CD8-positive, alpha-beta memory T cell (primary cell): ENCODE measurements at regions of chr19 and their contacts with region 1.

Region 1: GRCh38 chr19:1113033-1113985 is 9.5 kb downstream of the GPX4 start:
- DNase-seq: peak; percentile 78 to 90 (median 83)
- H3K4me3 ChIP-seq: no peak overlapping the region
- H3K4me3 Mint-ChIP-seq: no peak overlapping the region
- H3K27ac ChIP-seq: peak overlapping the region; percentile 16
- H3K27ac Mint-ChIP-seq: peak overlapping the region in 3 of 8 donors; percentile 42 to 57 (median 43)
- H3K4me1 ChIP-seq: peaks cover 6% of the 10 kb centered on the region
- H3K4me1 Mint-ChIP-seq: peaks cover 0 to 3% (median 0%) of the 10 kb centered on the region in 3 donors
- H3K27me3 ChIP-seq: no peaks in the 10 kb centered on the region
- H3K27me3 Mint-ChIP-seq: no peaks in the 10 kb centered on the region

Region 2: DNA sequence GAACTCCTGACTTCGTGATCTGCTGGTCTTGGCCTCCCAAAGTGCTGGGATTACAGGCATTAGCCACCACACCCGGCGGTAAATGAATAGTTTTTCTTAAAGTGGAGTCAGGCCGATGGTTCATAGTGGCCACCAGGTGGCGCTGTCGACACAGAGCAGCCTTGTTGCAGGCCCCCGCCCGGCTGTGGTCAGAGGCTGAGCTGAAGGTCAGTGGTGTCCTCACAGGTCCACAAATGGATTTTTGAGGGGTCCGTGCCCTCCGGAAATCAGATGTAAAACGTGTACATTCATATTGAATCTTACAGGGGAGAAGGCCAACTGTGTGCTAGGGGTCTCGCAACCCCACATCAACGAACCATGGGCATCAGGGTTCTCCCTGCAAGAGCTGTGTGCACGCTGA is 142.6 kb before region 1 on chr19:
- CTCF ChIA-PET with region 1: no interaction called
- POLR2A ChIA-PET with region 1: no interaction called
- DNase-seq: no peak
- H3K4me3 ChIP-seq: no peak overlapping the region
- H3K4me3 Mint-ChIP-seq: no peak overlapping the region
- H3K27ac ChIP-seq: no peak overlapping the region
- H3K27ac Mint-ChIP-seq: no peak overlapping the region
- H3K4me1 ChIP-seq: no peaks in the 10 kb centered on the region
- H3K4me1 Mint-ChIP-seq: no peaks in the 10 kb centered on the region
- H3K27me3 ChIP-seq: no peaks in the 10 kb centered on the region
- H3K27me3 Mint-ChIP-seq: no peaks in the 10 kb centered on the region

Region 3: GRCh38 chr19:1131738-1132551 is 18.6 kb after region 1 on chr19:
- CTCF ChIA-PET with region 1: interaction called, 13 read pairs
- POLR2A ChIA-PET with region 1: interaction called, 4 read pairs
- DNase-seq: peak; percentile 80 to 90 (median 83)
- H3K4me3 ChIP-seq: peak overlapping the region; percentile 84
- H3K4me3 Mint-ChIP-seq: peak overlapping the region; percentile 78 to 92 (median 86)
- H3K27ac ChIP-seq: peak overlapping the region; percentile 87
- H3K27ac Mint-ChIP-seq: peak overlapping the region; percentile 85 to 99 (median 92)
- H3K4me1 ChIP-seq: peaks cover 36% of the 10 kb centered on the region
- H3K4me1 Mint-ChIP-seq: peaks cover 21 to 51% (median 24%) of the 10 kb centered on the region in 3 donors
- H3K27me3 ChIP-seq: no peaks in the 10 kb centered on the region
- H3K27me3 Mint-ChIP-seq: peaks cover 0 to 3% of the 10 kb centered on the region in 2 donors

Region 4: GRCh38 chr19:1189419-1189818 is 76.1 kb after region 1 on chr19:
- CTCF ChIA-PET with region 1: interaction called, 50 read pairs
- POLR2A ChIA-PET with region 1: no interaction called
- DNase-seq: peak in 2 of 5 donors; percentile 37 to 73
- H3K4me3 ChIP-seq: no peak overlapping the region
- H3K4me3 Mint-ChIP-seq: peak overlapping the region in 6 of 7 donors; percentile 18 to 66 (median 46)
- H3K27ac ChIP-seq: peak overlapping the region; percentile 33
- H3K27ac Mint-ChIP-seq: peak overlapping the region; percentile 17 to 92 (median 75)
- H3K4me1 ChIP-seq: peaks cover 30% of the 10 kb centered on the region
- H3K4me1 Mint-ChIP-seq: peaks cover 19 to 27% (median 22%) of the 10 kb centered on the region in 3 donors
- H3K27me3 ChIP-seq: no peaks in the 10 kb centered on the region
- H3K27me3 Mint-ChIP-seq: peaks cover 0 to 2% of the 10 kb centered on the region in 2 donors

Region 5: DNA sequence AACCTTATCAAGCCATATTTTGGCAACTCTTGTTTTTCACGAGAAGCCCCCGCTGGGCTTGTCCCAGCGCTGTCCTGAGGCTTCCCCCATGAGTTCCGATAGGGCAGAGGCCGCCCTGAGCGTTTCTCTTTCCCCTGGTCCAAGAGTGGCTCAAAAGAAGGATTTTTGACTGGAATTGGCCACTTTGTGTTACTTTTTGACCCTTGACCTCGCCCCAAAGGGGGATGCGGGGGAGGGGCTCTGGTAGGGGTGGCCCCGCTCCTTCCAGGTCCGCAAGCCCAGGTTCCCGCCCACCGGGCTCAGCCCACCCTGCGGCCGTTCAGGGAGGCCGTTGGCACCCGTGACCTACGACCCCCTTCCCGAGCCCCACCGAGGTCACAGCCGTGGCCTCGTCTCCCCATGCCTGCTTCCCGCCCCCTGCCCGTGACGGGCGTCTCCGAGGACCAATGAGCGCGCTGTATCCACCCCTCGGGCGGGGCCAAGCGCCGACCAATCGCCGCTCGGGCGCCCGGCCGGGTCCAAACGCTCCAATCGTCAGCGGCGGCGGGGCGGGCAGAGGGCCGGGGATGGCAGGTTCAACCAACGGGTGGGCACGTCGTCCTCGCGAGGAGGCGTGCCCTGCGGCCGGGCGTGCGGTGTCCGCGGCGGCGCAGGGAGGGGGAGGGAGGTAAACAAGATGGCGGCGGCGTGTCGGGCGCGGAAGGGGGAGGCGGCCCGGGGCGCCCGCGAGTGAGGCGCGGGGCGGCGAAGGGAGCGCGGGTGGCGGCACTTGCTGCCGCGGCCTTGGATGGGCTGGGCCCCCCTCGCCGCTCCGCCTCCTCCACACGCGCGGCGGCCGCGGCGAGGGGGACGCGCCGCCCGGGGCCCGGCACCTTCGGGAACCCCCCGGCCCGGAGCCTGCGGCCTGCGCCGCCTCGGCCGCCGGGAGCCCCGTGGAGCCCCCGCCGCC is 92.1 kb after region 1 on chr19 and contains the start of gene STK11:
- CTCF ChIA-PET with region 1: interaction called, 13 read pairs
- POLR2A ChIA-PET with region 1: interaction called, 3 read pairs
- DNase-seq: peak; percentile 99 to 100 (median 99)
- H3K4me3 ChIP-seq: peak within 1 kb of the TSS; percentile 90
- H3K4me3 Mint-ChIP-seq: peak within 1 kb of the TSS; percentile 92 to 98 (median 95)
- H3K27ac ChIP-seq: peak within 1 kb of the TSS; percentile 67
- H3K27ac Mint-ChIP-seq: peak within 1 kb of the TSS; percentile 79 to 98 (median 92)
- H3K4me1 ChIP-seq: peaks cover 40% of the 10 kb centered on the region
- H3K4me1 Mint-ChIP-seq: peaks cover 17 to 42% (median 25%) of the 10 kb centered on the region in 3 donors
- H3K27me3 ChIP-seq: no peaks in the 10 kb centered on the region
- H3K27me3 Mint-ChIP-seq: no peaks in the 10 kb centered on the region
- total RNA-seq, gene STK11: 66.9 to 69.7 TPM